CD8-positive, alpha-beta T cell (primary cell): ENCODE measurements at regions of chr1 and their contacts with region 1.

Region 1: GRCh38 chr1:183694066-183694465 is 41.0 kb upstream of the APOBEC4 start:
- DNase-seq: no peak
- ATAC-seq: no peak
- H3K4me3 ChIP-seq: no peak overlapping the region
- H3K4me3 Mint-ChIP-seq: no peak overlapping the region
- H3K27ac ChIP-seq: no peak overlapping the region
- H3K27ac Mint-ChIP-seq: no peak overlapping the region
- H3K4me1 ChIP-seq: no peaks in the 10 kb centered on the region
- H3K4me1 Mint-ChIP-seq: peaks cover 10% of the 10 kb centered on the region
- H3K27me3 ChIP-seq: no peaks in the 10 kb centered on the region
- H3K27me3 Mint-ChIP-seq: no peaks in the 10 kb centered on the region
- CTCF ChIP-seq: no peak

Region 2: DNA sequence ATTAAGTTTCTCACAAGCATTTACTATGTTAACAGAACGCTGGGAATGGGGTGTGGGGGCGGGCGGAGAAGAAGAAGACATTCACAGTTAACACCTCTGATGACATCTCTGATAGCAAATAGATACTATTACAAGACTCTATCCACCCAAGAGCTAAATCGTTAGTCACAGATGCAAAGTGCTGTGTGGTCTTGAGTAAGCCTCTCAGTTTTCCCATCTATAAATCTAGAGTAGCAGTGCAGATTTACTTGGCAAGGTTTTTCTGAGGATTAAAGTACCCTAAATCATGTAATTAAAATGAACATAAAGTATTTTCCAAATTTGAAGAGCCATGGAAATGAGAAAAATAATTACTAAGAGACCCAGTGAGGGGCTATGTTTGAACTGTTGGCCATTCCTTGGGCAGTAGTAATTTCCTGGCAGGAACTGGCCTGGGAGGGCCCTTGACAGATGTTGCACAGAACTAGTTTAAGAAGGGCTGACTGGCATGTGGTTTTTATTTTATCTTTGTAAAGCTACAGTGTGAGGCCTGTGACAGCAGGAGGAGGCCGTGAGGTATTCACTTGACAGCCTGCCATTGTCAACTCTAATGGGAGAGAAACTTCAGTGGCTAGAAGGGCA is 17.8 kb after region 1 on chr1:
- CTCF ChIA-PET with region 1: no interaction called
- POLR2A ChIA-PET with region 1: no interaction called
- intact Hi-C with region 1: loop called in 1 of 2 experiments (anchors 2 kb)
- DNase-seq: no peak
- ATAC-seq: no peak
- H3K4me3 ChIP-seq: no peak overlapping the region
- H3K4me3 Mint-ChIP-seq: no peak overlapping the region
- H3K27ac ChIP-seq: no peak overlapping the region
- H3K27ac Mint-ChIP-seq: no peak overlapping the region
- H3K4me1 ChIP-seq: no peaks in the 10 kb centered on the region
- H3K4me1 Mint-ChIP-seq: no peaks in the 10 kb centered on the region
- H3K27me3 ChIP-seq: no peaks in the 10 kb centered on the region
- H3K27me3 Mint-ChIP-seq: no peaks in the 10 kb centered on the region
- CTCF ChIP-seq: no peak

Region 3: GRCh38 chr1:183734543-183735036 is 40.5 kb after region 1 on chr1:
- CTCF ChIA-PET with region 1: no interaction called
- POLR2A ChIA-PET with region 1: no interaction called
- intact Hi-C with region 1: no loop called
- DNase-seq: no peak
- ATAC-seq: no peak
- H3K4me3 ChIP-seq: no peak overlapping the region
- H3K4me3 Mint-ChIP-seq: no peak overlapping the region
- H3K27ac ChIP-seq: no peak overlapping the region
- H3K27ac Mint-ChIP-seq: no peak overlapping the region
- H3K4me1 ChIP-seq: no peaks in the 10 kb centered on the region
- H3K4me1 Mint-ChIP-seq: no peaks in the 10 kb centered on the region
- H3K27me3 ChIP-seq: no peaks in the 10 kb centered on the region
- H3K27me3 Mint-ChIP-seq: no peaks in the 10 kb centered on the region
- CTCF ChIP-seq: no peak

Region 4: DNA sequence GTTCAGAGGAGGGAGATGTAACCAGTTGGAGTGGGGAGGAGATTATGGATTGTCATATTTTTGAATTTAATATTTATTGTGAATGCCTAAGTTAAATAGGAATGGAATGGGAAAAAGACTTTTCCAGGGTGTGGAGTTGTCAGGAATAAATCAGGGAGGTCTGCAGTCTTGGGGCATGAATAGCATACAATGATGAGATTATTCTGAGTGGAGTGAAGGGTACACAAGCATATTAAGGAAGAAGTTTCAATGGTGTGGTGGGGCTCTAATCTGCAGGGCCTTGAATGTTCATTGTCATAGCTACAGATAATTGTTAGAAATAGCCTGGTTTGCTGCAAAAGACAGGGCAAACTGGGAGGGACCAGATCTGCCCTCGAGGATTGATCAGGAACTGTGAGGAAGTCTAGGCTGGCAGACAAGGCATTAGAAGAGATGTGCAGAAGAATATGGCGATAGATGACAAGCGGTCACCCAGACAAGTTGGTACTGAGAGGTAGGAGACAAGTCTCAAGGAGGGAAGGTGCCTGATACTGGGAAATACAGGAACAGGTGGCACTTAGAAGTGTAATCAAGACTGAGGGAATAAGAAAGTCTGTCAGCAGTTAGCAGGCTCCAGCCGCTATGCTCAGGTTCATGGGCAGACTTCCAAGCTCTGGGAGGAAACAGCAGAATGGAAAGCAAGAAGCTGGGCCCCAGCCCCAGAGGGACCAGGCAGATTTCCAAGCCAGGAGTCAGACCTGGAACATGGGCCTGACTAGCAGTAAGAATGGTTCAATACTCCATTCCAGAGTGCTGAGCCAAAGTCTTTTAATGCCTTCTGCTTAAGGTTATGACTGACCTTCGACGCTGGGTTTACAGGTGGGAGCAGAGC is 89.9 kb after region 1 on chr1:
- CTCF ChIA-PET with region 1: no interaction called
- POLR2A ChIA-PET with region 1: no interaction called
- intact Hi-C with region 1: no loop called
- DNase-seq: no peak
- ATAC-seq: no peak
- H3K4me3 ChIP-seq: no peak overlapping the region
- H3K4me3 Mint-ChIP-seq: no peak overlapping the region
- H3K27ac ChIP-seq: no peak overlapping the region
- H3K27ac Mint-ChIP-seq: no peak overlapping the region
- H3K4me1 ChIP-seq: no peaks in the 10 kb centered on the region
- H3K4me1 Mint-ChIP-seq: no peaks in the 10 kb centered on the region
- H3K27me3 ChIP-seq: no peaks in the 10 kb centered on the region
- H3K27me3 Mint-ChIP-seq: no peaks in the 10 kb centered on the region
- CTCF ChIP-seq: no peak

Region 5: DNA sequence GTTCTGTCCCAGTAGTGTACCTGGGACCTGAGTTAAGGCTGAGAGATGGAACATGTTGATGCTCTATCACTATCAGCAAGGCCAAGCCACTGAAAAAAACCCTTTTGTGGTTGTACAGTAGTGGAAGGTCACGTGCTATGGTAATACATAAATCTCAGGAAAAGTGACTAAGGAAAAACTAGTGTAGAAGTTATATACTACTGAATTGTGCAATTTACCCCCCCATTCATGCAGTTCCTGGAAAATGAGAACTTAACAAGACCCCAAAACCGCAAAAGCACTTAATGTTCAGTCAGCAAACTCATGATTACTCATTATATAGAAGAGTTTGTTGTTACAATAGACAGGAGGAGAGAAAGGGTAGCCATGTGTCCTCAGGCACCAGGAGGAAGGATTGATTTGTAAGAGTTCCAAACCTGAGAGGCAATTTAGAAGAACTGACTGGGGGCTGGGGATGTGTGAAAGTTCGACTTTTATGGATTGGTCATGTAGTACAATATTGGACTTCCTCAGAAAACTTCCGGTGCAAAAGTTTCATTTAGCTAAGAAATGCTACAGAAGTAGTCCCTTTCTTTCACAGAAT is 202.5 kb after region 1 on chr1:
- CTCF ChIA-PET with region 1: no interaction called
- POLR2A ChIA-PET with region 1: no interaction called
- intact Hi-C with region 1: no loop called
- DNase-seq: peak in 1 of 9 experiments; percentile 16
- ATAC-seq: no peak
- H3K4me3 ChIP-seq: no peak overlapping the region
- H3K4me3 Mint-ChIP-seq: no peak overlapping the region
- H3K27ac ChIP-seq: no peak overlapping the region
- H3K27ac Mint-ChIP-seq: no peak overlapping the region
- H3K4me1 ChIP-seq: no peaks in the 10 kb centered on the region
- H3K4me1 Mint-ChIP-seq: peaks cover 10% of the 10 kb centered on the region
- H3K27me3 ChIP-seq: no peaks in the 10 kb centered on the region
- H3K27me3 Mint-ChIP-seq: no peaks in the 10 kb centered on the region
- CTCF ChIP-seq: no peak